Spleen (tissue), 13 donors: ENCODE measurements at regions of chr2 and their contacts with region 1.

Region 1: DNA sequence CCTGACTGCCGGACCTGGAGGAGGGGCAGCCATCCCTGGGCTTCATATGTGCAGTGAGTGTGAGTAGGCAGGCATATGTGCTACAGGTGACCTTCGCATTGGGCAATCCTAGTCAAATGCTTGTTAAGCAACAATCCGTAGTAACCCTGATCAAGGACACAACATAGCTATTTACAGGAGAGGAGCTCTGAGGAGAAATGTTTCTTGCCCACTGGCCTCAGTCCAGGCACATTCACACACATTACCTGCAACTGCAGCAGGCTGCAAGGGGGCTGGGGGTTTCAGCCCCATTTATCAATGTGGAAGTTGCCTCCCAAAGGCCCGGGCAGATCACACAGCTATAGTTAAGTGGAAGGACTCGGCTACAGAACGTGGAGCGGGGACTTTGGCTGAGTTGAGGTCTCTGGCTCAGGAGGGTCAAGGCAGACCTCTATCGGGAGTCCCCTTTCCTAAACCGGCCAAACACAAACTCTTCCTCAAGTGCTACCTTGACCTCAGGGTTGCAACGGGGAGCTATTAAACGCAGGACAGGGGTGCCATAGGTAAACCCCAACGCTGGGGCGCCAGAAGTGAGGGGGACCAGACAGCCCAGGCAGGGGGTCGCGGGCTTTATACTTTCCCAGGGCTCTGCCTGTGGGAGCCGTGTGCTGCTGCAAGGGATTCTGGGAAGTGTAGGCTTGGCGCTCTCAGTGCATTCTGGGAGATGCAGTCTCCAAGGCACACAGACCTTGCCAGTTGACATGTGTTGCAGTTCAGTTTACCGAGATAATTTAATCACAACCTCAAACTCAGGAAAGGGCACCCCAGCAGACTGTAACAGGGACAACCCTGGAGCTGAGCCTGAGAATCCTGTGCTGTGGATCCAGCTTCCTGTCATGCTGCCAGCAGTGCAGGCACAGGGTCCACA is 9.4 kb downstream of the KHK start:
- DNase-seq: peak; percentile 86
- H3K4me3 ChIP-seq: peak overlapping the region in 7 of 8 donors; percentile 20 to 69 (median 36)
- H3K27ac ChIP-seq: peak overlapping the region in 2 of 8 donors; percentile 37 to 54
- H3K4me1 ChIP-seq: peaks cover 0 to 22% (median 14%) of the 10 kb centered on the region in 6 donors
- H3K27me3 ChIP-seq: no peaks in the 10 kb centered on the region
- CTCF ChIP-seq: no peak
- POLR2A ChIP-seq: no peak

Region 2: DNA sequence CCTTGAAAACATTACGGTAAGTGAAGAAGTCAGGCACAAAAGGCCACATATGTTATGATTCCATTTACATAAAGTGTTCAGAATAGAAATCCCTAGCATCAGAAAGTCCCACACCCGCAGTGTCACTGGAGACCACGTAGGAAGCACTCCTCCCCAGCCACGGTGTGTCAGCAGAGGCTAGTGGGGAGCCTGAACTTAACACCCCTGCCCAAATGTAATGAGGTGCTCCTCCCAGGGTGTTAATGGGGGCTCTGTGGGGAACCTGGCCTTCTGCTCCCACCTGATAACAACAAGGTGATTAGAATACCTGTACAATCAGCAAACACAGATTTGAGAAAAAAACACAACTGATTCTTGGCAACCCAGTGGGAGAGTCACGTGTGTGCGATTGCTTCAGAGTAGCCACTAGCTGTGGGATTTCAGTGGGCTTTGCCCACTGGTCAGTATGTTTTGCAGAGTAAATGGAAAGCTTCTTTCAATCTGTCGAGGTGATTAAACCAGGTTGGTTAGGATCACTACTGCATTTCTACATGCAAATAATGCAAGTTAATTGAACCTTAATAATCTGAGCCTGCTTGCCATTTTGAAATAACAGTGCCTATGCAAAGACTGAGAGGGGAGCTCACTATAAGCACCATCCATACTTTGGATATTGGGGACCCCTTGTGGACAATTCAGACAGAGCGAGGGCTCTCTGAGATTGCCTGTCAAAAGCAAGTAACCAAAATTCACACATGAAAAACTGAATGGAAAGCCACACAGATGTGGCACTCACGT is 95.2 kb after region 1 on chr2:
- intact Hi-C with region 1: loop called (anchors 5 kb)
- DNase-seq: no peak
- H3K4me3 ChIP-seq: no peak overlapping the region
- H3K27ac ChIP-seq: no peak overlapping the region
- H3K4me1 ChIP-seq: no peaks in the 10 kb centered on the region
- H3K27me3 ChIP-seq: no peaks in the 10 kb centered on the region
- CTCF ChIP-seq: peak; percentile 27 to 77 (median 63)
- POLR2A ChIP-seq: no peak

Region 3: DNA sequence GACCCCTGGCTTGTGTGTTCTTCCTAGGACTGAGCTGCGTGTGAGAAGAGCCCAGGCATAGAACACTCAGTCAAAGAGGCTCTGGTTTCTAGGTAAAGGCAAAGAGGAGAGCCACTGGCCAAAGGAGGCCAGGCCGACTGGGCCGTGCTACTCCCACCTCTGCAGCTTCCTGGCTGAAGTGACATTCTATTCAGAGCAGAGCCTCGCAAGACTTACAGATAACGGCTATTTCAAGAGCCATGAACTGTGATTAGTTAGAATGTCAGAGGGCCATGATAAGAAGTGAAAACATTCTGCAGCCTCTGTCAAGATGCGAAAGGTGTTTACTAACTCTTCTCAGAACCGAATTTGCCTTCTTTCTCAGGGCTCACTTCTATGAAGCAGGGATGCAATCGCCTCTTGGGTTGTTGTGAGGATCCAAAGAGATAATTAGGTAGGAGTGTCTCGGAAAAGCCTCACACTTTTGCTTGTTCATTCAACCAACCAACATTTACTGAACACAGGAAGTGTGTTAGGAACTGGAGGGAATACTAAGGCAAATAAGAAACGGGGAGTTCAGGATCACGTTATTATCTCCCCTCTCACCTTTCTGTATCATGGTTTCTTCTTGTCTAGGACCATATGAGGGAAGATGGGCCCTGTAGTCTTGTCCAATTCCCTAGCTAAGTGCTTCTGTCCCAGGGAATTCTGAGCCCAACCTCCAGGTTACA is 175.8 kb after region 1 on chr2:
- intact Hi-C with region 1: loop called (anchors 5 kb)
- DNase-seq: no peak
- H3K4me3 ChIP-seq: no peak overlapping the region
- H3K27ac ChIP-seq: no peak overlapping the region
- H3K4me1 ChIP-seq: no peaks in the 10 kb centered on the region
- H3K27me3 ChIP-seq: peaks cover 0 to 29% (median 0%) of the 10 kb centered on the region in 7 donors
- CTCF ChIP-seq: no peak
- POLR2A ChIP-seq: no peak